Activated CD4-positive, alpha-beta memory T cell treated with anti-CD3 and anti-CD28 coated beads for 36 hours (primary cell): ENCODE measurements at regions of chr18 and their contacts with region 1.

Region 1: DNA sequence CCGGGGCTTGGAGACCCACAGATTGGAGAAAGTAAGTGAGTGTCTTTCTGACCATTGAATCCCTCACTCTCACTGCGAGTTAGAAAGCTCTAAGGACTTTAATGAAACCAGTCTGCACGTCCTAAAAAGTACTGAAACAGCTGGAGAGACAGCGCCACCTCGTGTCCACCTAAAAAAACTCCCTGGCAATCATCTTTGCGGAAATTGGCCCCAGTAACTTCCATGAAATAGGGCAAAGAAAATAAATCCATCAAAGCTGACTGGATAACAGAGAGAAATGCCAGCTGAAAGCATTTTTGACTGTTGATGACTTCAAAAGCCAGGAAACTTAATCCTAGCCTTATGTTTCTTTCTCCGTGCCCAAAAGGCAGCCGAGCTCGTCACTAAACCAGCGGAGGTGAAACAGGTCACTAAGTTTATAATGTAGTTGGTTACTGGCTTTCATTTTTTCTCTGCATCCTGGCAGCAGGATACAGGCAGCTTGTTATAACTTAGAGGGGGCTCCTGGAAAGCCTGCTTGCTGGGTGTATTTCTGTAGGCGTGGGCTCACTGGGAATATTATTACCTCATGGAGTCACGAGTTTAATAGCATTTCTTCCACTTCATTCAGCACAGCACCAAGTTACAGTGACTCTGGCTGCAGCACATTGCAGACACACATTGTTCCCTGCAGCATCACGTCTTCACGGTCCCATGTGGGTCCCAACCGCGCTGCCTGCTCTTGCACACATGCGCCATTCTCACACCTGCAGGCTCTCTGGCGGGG is 266.5 kb downstream of the HRH4 start:
- DNase-seq: peak; percentile 63
- H3K4me3 Mint-ChIP-seq: no peak overlapping the region
- H3K27ac Mint-ChIP-seq: no peak overlapping the region
- H3K4me1 Mint-ChIP-seq: no peaks in the 10 kb centered on the region
- H3K27me3 Mint-ChIP-seq: no peaks in the 10 kb centered on the region

Region 2: GRCh38 chr18:24543805-24544498 is 183.0 kb before region 1 on chr18:
- CTCF ChIA-PET with region 1: interaction called, 8 read pairs
- POLR2A ChIA-PET with region 1: no interaction called
- intact Hi-C with region 1: loop called (anchors 2 kb)
- DNase-seq: no peak
- H3K4me3 Mint-ChIP-seq: no peak overlapping the region
- H3K27ac Mint-ChIP-seq: no peak overlapping the region
- H3K4me1 Mint-ChIP-seq: no peaks in the 10 kb centered on the region
- H3K27me3 Mint-ChIP-seq: peaks cover 5% of the 10 kb centered on the region